Dendritic cell treated with granulocyte-macrophage colony-stimulating factor and Interleukin-4, amounts not matched to agents 40 ng/mL and 50 ng/mL, for 4 days (primary cell): ENCODE measurements at regions of chr7 and their contacts with region 1.

Region 1: DNA sequence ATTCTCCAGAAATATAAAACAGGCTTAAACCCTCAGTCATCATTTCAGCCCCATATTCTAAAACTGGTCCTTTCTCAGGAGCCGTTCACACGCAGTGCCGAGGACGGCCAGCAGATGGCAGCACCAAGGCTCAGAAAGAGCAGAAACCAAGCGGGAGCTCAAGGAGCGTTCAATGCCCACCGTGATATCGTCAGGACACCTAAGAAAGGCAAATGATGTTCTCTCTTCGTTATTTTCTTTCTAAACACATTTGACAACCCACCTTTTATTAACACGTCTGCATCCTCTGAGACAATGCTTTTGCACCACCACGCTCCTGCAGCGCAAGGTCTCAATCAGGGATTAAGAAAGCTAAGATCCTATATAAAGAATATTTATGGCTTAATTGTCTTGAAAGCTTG is 45.7 kb upstream of the RBM33 start:
- H3K4me3 Mint-ChIP-seq: peak overlapping the region; percentile 51
- H3K27ac Mint-ChIP-seq: no peak overlapping the region
- H3K4me1 Mint-ChIP-seq: peaks cover 62% of the 10 kb centered on the region
- H3K27me3 Mint-ChIP-seq: peaks cover 17% of the 10 kb centered on the region

Region 2: DNA sequence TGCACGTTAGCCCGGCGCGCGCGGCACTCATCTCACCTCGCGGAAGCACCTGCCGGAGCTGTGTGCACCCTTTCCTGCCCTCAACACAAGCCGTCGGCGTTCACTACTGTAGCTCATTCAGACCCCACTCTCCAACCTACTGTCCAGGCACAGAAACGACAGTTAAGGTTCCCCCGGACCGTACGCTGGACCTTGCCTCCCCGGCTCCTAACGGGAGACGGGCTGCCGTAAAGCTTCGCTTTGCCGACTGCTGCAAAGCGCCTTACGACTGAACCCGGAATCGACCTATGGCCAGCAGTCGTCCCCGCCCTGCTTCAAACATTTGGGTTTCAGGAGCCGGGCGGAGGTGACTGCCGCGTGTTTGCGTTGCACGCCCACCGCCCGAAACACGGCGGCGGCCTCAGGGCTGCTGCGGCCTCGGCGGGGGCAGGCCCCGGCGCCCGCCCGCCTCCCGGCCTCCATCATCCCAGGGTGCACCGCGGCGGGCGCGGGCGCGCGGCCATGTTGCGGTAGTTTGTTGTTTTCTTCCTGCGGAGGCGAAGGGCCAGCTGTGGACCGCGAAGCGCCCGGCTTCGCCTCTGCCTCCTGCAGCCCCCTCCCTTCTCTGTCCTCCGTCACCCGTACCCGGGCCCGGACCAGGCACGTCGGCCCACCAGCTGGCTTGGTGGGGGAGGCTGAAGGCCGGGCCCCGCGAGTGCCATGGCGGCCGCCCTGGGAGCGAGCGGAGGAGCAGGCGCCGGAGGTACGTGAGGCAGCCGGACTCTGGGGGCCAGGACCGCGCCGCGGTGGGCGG is 45.6 kb after region 1 on chr7 and contains the start of gene RBM33:
- intact Hi-C with region 1: loop called (anchors 2 kb)
- H3K4me3 Mint-ChIP-seq: peak within 1 kb of the TSS; percentile 100
- H3K27ac Mint-ChIP-seq: peak within 1 kb of the TSS; percentile 94
- H3K4me1 Mint-ChIP-seq: peaks cover 42% of the 10 kb centered on the region
- H3K27me3 Mint-ChIP-seq: no peaks in the 10 kb centered on the region

Region 3: DNA sequence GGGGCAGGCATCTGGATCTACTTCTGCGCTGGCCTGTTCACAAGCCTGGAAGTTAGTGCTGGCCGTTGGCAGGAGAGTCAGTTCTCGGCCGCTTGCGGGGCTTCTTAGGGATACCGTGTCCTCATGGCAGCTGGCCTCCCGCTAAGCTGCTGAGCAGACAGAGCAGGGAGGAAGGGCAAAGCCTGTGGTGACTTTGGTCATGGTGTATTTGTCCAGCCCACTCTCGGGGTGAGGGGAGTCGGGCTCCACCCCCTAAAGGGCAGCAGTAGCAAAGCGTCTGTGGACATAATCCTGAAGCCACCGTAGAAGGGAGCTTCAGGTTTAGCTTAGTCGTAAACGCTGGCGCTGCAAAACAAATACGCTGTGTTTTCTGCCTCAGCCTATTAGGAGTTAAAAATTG is 1552.1 kb after region 1 on chr7:
- intact Hi-C with region 1: no loop called
- H3K4me3 Mint-ChIP-seq: no peak overlapping the region
- H3K27ac Mint-ChIP-seq: no peak overlapping the region
- H3K4me1 Mint-ChIP-seq: peaks cover 37% of the 10 kb centered on the region
- H3K27me3 Mint-ChIP-seq: no peaks in the 10 kb centered on the region